HEK293 (cell line): ENCODE measurements at regions of chr1 and their contacts with region 1.

Region 1: GRCh38 chr1:36516372-36517325 is 33.9 kb upstream of the CSF3R start:
- H3K4me3 ChIP-seq: no peak overlapping the region
- H3K27ac ChIP-seq: no peak overlapping the region
- H3K4me1 ChIP-seq: no peaks in the 10 kb centered on the region
- CTCF ChIP-seq: peak; percentile 85

Region 2: DNA sequence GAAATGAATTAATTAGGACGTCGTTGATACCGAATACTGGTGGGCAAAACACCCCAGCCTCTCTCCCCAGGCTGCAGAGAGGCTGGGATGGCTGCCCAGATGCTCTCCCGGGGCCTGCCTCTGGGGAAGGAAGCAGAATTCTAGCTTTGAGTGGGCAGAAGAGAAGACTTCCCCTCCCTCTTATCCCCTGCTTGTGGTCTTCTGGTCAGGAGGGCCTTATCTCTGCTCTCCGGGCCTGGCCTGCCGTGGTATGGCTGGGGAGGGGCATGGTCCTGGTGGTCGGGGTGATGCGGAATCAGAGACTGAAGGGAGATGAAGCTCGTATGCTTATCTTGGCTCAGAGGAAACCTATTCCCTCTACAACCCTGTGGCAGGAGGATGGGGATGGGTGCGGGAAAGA is 24.1 kb before region 1 on chr1:
- CTCF ChIA-PET with region 1: interaction called, 18 read pairs
- POLR2A ChIA-PET with region 1: no interaction called
- H3K4me3 ChIP-seq: no peak overlapping the region
- H3K27ac ChIP-seq: no peak overlapping the region
- H3K4me1 ChIP-seq: no peaks in the 10 kb centered on the region
- CTCF ChIP-seq: no peak

Region 3: DNA sequence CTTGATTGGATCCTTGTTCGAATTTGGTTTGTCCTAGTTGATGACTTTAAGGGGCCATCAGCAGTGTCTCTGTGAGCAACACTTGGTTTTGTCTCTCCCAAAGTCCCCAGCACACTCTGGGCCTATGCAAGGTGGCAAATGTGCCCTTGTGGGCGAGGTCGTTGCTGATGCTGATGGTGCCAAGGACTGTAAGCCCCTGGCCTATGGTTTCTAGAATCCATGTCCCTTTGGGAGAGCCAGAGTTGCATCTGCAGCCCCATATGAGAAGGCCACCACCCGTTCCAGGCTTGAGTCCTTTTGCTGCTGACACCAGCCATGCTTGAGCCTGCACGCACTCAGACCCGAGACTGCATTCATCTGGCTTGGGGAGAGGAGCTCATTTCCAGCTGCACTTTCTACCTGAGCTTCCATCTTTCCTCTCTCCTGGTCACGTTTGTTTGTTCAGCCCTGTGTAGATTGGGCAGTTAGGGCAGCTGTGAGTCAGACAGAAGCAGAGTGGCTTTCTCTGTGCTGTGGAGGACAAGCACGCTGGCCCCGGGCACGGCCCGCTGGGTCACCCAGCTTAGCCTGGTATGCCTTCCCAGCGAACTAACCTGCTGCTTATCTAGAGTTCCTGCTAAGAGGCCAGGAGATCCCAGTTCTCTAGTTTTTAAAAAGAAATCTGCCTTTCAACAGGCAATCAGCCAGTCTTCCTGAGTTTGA is 18.2 kb after region 1 on chr1:
- CTCF ChIA-PET with region 1: interaction called, 26 read pairs
- POLR2A ChIA-PET with region 1: no interaction called
- H3K4me3 ChIP-seq: no peak overlapping the region
- H3K27ac ChIP-seq: no peak overlapping the region
- H3K4me1 ChIP-seq: no peaks in the 10 kb centered on the region
- CTCF ChIP-seq: no peak

Region 4: DNA sequence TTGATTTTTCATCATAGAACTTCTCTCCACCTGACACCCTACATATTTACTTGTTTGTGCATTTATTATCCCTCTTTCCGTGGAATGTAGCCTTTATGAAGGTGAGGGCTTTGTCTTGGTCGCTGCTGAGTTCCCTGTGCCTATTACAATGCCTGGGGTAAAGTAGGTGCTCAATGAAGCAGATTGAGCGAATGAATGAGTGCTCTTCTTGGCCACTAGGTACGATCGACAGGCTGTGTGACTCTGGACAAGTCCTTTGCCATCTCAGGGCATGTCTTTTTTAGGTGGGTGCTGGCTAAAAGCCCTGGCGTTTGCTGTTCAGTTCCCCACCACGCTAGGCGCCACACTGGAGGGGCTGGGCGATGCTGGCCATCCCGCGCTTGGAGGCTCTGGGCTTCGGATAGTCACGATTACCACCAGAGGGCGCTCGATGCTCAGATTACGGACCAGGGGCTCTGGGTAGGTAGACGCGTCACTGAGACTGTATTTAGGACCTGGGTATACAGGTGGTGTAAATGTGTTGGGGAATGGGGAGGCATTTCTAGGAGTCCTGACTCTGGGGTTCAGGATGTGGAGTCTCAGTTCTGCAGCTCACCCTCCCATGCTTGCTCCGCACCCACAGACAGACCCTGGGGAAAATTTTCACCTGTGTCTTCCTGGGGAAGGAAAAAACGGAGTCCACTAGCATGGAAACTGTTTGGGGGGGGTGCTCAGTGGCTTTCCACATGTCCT is 37.1 kb after region 1 on chr1:
- CTCF ChIA-PET with region 1: interaction called, 26 read pairs
- POLR2A ChIA-PET with region 1: no interaction called
- H3K4me3 ChIP-seq: no peak overlapping the region
- H3K27ac ChIP-seq: no peak overlapping the region
- H3K4me1 ChIP-seq: no peaks in the 10 kb centered on the region
- CTCF ChIP-seq: peak; percentile 91

Region 5: DNA sequence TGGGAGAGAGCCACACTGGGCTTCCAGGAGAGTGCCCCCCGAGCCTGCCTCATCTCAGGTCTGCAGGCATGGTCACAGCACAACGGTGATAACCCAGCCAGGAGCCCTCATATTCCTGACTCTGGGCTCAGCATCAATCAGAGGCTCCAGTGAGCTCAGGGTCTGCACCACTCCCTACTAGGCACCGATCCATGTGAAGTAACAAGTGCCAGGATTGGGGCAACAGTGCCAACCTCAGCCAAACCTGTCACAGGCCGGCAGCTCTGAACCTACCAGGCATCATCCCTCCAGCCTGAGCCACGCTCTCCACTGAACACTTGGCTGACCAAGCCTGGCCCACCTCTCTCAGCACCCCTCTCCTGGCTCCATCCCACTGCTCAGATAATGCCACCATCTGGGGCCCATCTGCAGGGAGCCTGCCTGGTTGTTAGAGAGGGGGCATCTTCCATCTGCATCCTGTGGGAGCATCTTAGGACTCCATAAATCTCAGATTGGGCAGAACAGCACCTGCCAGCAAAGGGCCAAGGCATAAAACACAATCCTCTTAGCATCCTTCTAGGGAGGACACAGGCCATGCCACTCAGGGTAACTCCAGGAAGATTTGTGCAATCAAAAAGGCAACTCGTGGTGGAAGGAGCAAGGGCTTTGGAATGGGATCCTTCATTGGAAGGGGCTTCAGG is 179.8 kb after region 1 on chr1:
- CTCF ChIA-PET with region 1: no interaction called
- POLR2A ChIA-PET with region 1: no interaction called
- H3K4me3 ChIP-seq: no peak overlapping the region
- H3K27ac ChIP-seq: no peak overlapping the region
- H3K4me1 ChIP-seq: no peaks in the 10 kb centered on the region
- CTCF ChIP-seq: no peak